Right ventricle myocardium inferior (tissue), 1 donor: ENCODE measurements at regions of chrX and their contacts with region 1.

Region 1: DNA sequence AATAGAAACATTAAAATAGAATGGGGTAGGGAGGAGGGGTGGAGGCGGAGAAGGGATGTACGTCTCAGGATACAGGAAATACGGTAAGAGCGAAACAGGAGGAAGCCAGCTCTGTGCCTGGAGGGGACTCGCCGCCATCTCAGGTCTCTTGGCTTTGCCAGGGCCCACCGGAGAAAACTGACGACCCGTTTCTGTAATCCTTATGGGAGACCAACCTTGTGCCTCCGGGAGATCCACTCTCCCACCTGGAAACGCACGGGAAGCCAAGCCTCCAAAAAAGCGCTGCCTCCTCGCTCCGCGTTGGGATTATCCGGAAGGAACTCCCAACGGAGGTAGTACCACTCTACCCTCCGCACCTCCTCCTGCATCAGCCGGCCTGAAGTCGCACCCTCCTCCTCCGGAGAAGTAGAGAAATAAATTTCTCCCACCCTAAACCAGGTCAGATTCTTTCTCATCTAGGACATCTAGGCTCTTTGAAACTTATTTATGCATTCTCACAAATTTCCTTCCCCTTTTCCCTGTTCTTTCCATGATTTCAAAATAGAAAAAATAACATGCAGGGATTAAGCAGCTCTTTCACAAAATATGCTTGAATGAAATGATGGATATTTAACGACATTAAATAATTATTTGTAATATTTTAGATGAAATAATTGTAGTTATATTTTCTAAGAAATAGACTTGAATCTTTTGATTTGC is at the start of gene NBDY:
- DNase-seq: peak; percentile 37
- ATAC-seq: peak; percentile 90
- total RNA-seq, gene NBDY: 21.4 TPM

Region 2: GRCh38 chrX:56281789-56282188 is 447.5 kb before region 1 on chrX:
- intact Hi-C with region 1: loop called (anchors 5 kb)
- DNase-seq: no peak
- ATAC-seq: no peak